Ascending aorta (tissue), 2 donors: ENCODE measurements at regions of chr22 and their contacts with region 1.

Region 1: DNA sequence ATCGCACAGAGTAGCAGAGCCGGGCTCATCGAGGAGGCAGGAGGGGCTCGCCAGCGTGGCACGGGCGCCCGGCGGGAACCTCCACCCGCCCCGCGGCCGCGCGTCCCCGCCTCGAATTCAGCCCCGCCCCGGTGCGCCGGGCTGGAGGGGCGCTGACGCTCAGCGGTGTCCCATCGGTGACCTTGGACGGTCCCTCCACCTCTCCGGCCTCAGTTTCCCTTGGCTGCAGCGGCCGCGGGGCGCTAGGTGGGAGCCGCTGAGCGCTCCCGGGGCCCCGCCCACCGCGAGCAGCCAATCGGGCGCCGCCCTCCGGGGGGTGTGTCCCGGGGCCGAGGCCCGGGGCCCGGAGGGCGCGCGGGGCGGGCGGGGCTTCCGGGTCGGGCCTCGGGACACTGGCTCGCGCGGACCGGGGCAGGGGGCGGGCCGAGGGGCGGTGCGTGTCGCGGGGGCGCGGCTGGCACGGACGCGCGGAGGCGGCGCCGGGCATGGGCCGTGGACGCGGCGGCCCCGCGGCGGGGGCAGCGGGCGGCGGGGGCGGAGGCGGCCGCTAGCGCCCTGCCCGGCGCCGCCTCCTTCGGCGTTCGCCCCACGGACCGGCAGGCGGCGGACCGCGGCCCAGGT is at the start of gene PPARA:
- DNase-seq: peak in 1 of 2 donors; percentile 94
- H3K4me3 ChIP-seq: peak within 1 kb of the TSS; percentile 91 to 94
- H3K27ac ChIP-seq: peak within 1 kb of the TSS; percentile 93
- H3K4me1 ChIP-seq: peaks cover 0 to 12% of the 10 kb centered on the region in 2 donors
- H3K27me3 ChIP-seq: no peaks in the 10 kb centered on the region
- CTCF ChIP-seq: no peak
- total RNA-seq, gene PPARA: 20.1 TPM

Region 2: DNA sequence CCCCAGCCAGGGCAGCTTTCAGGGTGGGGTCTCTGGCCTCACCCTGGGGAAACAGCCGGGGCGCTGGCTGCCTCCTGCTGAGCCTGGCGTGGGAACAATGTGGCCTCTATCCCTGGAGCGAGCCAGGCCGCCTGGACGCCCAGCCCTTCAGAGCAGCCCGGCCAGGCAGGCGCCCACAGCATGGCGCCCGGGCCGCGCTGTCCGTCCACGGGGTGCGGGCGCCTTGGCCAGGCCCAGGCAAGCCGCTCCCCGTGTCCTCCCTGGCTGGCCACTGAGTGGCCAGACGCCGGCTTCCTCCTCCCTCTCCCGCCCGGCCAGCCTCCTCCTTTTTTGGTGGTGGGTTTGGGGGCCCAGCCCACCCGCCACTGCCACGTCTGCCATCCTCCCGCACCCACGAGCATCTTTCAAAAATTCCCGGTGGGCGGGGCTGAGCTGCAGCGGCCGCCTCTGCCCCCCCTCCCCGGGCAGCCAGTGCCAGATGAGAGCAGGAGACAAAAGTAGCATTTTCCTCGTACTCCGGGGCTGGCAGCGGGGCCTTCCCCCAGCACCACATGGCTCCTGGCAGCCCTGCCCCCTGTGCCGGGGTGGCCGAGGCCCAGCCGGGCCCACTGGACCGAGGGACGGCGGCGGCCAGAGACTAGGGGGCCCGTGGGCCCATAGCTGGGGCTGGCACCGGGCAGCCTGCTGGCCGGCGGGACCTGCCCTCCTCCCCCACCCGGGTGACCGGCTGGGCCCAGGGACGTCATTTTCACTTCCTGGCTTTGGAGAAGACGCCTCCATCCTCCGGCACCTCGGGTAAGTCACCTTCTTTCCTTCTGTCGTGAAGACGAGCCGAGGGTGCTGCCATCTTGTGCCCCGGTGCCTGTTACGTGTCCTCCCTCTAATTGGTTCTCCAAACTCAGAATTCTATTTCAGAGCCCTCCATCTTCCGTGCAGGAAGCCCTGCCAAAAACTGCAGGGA is 70.0 kb before region 1 on chr22:
- intact Hi-C with region 1: loop called (anchors 2 kb)
- DNase-seq: peak; percentile 71 to 96
- H3K4me3 ChIP-seq: peak overlapping the region; percentile 80 to 89
- H3K27ac ChIP-seq: peak overlapping the region; percentile 96 to 100
- H3K4me1 ChIP-seq: peaks cover 23 to 55% of the 10 kb centered on the region in 2 donors
- H3K27me3 ChIP-seq: no peaks in the 10 kb centered on the region
- CTCF ChIP-seq: peak in 1 of 3 experiments; percentile 8

Region 3: DNA sequence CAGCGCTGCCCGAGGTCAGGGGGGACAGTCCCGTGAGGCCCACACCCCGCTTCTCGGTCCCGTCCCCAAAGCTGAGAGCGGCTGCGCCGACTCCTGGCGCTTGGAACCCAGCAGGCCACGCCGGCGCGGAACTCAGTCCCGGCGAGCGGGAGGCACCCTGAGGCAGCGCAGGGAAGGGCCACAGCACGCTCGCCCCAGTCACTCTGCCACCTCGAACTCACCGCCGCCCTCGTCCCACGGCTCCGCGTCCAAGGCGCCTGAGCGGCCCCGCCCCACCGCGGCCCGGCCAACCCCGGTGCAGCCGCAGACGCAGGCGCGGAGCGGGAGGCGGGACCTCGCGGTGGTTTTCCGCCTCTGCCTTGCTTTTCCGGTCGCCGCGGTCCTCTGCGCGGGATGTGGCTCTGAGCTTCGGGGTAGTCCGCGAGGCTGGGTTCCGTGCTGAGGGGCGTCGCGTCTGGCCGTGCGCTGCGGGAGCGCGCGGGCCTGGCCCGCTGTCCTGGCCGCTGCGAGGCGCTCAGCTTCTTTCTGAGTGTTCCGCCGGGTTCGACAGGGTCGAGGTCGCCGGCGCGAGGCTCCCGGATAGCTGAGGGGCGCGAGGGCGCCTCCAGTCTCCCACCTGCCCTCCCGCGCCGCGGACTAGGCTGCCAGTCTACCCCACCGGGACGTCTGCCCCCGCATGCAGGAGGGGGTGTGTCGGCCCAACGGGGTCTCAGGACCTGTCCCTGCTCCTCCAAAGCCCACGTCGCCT is 100.1 kb after region 1 on chr22 and contains the start of gene CDPF1:
- intact Hi-C with region 1: loop called (anchors 5 kb)
- DNase-seq: peak; percentile 43 to 94
- H3K4me3 ChIP-seq: peak within 1 kb of the TSS; percentile 88 to 98
- H3K27ac ChIP-seq: peak within 1 kb of the TSS; percentile 82
- H3K4me1 ChIP-seq: peaks cover 10 to 11% of the 10 kb centered on the region in 2 donors
- H3K27me3 ChIP-seq: no peaks in the 10 kb centered on the region
- CTCF ChIP-seq: peak in 1 of 3 experiments; percentile 12
- total RNA-seq, gene CDPF1: 3.6 TPM

Region 4: DNA sequence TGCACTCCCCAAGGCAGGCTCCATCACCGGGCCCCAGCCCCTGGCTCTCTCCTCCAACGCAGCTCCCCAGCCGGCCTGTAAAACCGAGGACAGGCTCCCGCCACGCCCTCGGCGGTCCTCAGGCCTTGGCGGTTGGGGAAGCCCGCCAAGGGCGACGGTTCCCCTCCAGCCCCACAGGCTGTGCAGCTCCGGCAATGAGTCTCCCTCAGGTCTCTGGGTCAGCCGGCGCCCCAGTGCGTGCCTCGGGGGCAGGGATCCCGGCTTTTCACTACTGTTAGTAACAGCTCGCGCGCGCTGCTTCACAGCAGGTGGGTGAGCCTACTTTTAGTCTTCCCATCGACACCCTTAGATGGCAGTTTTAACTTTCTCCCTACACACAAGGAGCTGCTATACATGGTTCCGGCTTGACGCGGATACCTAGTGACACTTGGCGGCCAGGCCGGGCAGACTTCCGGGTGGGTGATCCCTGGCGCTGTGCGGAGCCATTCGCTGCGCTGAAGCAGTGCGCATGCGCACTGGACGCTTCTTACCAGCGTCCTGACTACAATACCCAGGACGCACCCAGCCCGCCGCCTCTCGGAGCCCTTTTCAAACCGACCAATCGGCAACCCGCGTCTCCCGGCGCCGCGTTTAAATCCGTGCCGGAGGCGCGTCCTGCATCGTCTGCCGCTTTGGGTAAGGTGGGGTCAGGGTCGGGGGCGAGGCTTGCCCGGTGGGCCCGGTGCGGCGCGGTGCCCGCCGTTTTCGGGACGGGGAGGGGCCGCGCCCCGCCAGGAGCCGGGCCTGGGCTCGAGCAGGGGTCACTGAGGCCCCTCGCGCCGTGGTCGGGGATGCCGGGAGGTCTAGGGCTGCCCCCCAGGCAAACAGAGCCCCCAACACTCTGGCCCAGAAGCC is 146.4 kb after region 1 on chr22 and contains the start of gene GTSE1:
- intact Hi-C with region 1: loop called (anchors 1 kb)
- DNase-seq: peak; percentile 94 to 99
- H3K4me3 ChIP-seq: peak within 1 kb of the TSS; percentile 64 to 69
- H3K27ac ChIP-seq: peak within 1 kb of the TSS; percentile 87 to 95
- H3K4me1 ChIP-seq: peaks cover 0 to 14% of the 10 kb centered on the region in 2 donors
- H3K27me3 ChIP-seq: no peaks in the 10 kb centered on the region
- CTCF ChIP-seq: peak in 1 of 3 experiments; percentile 23
- total RNA-seq, gene GTSE1: not detected